Left colon (tissue), 2 donors: ENCODE measurements at regions of chr3 and their contacts with region 1.

Region 1: DNA sequence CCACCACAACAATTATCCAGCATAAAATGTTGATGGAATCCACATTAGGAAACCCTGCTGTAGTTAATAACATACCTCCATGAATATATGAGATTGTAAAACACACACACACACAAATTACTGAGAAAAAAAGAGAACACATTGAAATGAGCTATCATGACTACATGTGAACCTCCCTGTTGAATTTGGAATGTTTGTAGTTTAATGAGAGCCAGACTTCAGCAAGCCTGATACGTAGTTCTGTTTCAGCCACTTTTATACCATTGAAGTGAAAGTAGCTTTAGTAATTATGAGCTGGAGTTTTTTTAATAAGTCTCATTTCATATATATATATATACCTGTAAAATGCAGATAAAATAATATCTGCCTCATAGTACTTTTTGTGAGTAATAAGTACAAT is 1146.4 kb downstream of the NAALADL2 start:
- DNase-seq: no peak
- ATAC-seq: no peak

Region 2: DNA sequence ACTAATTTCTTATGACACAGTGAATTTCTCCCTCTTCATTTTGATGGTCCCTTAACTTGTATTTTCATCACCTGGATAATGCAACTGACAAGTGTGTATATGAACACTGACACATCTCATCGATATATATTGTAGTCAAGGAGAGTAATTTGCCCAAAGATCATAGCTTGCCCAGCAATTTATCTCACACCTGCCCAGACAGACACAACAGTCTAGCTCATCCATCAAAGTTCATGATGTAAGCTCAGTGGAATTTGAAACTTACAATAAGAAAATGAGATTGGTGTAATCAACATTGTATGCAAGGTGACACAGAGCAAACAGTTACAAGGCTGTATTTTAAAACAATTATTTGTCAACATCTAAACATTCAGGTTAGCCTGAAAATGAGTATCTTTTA is 340.7 kb before region 1 on chr3:
- intact Hi-C with region 1: no loop called
- DNase-seq: no peak
- ATAC-seq: no peak

Region 3: GRCh38 chr3:175957002-175957401 is 48.6 kb before region 1 on chr3:
- intact Hi-C with region 1: loop called in 1 of 2 experiments (anchors 2 kb)
- DNase-seq: no peak
- ATAC-seq: no peak